ENCODE measurements at regions of chr13 and their contacts with region 1.

Region 1: DNA sequence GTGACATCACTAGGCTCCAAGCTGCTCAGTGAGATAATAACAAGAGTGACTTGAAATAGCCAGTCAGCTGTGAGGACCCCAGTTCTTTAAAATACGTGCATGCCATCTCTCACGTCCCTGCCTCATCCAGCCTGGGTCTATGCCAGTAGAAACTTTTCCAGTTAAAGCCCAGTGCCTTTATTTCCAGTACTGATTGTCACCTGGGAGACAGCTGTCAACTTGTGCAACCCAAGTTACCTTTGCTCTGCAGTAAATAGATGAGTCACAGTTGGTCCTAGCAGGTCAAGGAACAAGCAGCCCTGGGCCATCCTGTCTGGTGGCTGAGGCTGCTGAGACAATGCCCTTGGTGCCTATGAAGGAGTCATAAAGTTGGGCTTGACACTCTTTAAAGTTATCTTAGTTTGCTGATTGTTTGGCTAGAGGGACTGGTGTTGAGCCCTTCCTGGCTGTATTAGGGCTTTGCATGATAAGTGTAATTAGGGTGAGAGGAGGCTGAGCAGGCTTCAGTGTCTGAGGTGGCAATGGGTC is 228.7 kb downstream of the LACC1 start:
- DNase-seq: no peak
- H3K4me3 ChIP-seq: no peak overlapping the region
- H3K27ac ChIP-seq: peak overlapping the region in 4 of 59 donors; percentile 22 to 36 (median 28)
- H3K27me3 ChIP-seq: no peaks in the 10 kb centered on the region
- CTCF ChIP-seq: no peak

Region 2: DNA sequence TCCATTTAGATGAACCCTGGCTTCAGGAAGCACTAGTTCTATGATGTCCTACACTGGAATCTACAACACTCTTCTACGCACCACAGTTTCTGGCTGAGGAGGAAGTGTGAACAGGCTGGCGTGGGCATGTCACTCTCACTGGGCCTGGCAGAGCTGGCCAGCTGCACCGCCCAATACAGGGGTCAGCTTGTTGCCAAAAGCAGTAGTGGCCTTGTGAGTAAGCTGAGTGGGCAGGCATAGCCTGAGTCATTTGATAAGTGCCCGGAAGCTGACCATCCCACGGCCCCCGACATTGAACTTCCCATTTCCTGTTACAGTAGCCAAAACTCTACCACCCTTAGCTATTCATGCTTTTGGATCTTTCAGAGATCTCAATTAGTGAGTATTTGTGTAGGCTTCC is 24.3 kb after region 1 on chr13:
- intact Hi-C with region 1: loop called in 1 of 2 experiments (anchors 2 kb)
- DNase-seq: peak in 8 of 10 donors; percentile 39 to 74 (median 58)
- H3K4me3 ChIP-seq: no peak overlapping the region
- H3K27ac ChIP-seq: peak overlapping the region in 35 of 59 donors; percentile 1 to 73 (median 42)
- H3K27me3 ChIP-seq: no peaks in the 10 kb centered on the region
- CTCF ChIP-seq: no peak